B cell (primary cell): ENCODE measurements at regions of chr7 and their contacts with region 1.

Region 1: GRCh38 chr7:98251841-98252639 is at the start of gene TECPR1:
- DNase-seq: peak; percentile 91
- ATAC-seq: peak; percentile 95
- H3K4me3 ChIP-seq: peak within 1 kb of the TSS; percentile 78 to 95 (median 83)
- H3K4me3 Mint-ChIP-seq: peak within 1 kb of the TSS; percentile 98
- H3K27ac ChIP-seq: peak within 1 kb of the TSS; percentile 68 to 71
- H3K27ac Mint-ChIP-seq: peak within 1 kb of the TSS; percentile 90
- H3K4me1 ChIP-seq: peaks cover 22 to 40% of the 10 kb centered on the region in 2 donors
- H3K4me1 Mint-ChIP-seq: peaks cover 34% of the 10 kb centered on the region
- H3K27me3 ChIP-seq: no peaks in the 10 kb centered on the region
- H3K27me3 Mint-ChIP-seq: no peaks in the 10 kb centered on the region
- CTCF ChIP-seq: no peak
- total RNA-seq, gene TECPR1: 52.2 and 66.4 TPM in 2 replicates

Region 2: GRCh38 chr7:97971990-97972943 is 279.8 kb before region 1 on chr7:
- CTCF ChIA-PET with region 1: no interaction called
- POLR2A ChIA-PET with region 1: no interaction called
- intact Hi-C with region 1: loop called (anchors 2 kb)
- DNase-seq: peak; percentile 86
- ATAC-seq: peak; percentile 92
- H3K4me3 ChIP-seq: peak overlapping the region; percentile 67 to 94 (median 88)
- H3K4me3 Mint-ChIP-seq: peak overlapping the region; percentile 97
- H3K27ac ChIP-seq: peak overlapping the region; percentile 26 to 88
- H3K27ac Mint-ChIP-seq: peak overlapping the region; percentile 89
- H3K4me1 ChIP-seq: peaks cover 11 to 14% of the 10 kb centered on the region in 2 donors
- H3K4me1 Mint-ChIP-seq: peaks cover 14% of the 10 kb centered on the region
- H3K27me3 ChIP-seq: no peaks in the 10 kb centered on the region
- H3K27me3 Mint-ChIP-seq: peaks cover 5% of the 10 kb centered on the region
- CTCF ChIP-seq: no peak

Region 3: GRCh38 chr7:98202367-98203195 is 49.5 kb before region 1 on chr7:
- CTCF ChIA-PET with region 1: interaction called, 3 read pairs
- POLR2A ChIA-PET with region 1: no interaction called
- intact Hi-C with region 1: loop called (anchors 1 kb)
- DNase-seq: peak; percentile 91
- ATAC-seq: peak; percentile 90
- H3K4me3 ChIP-seq: peak overlapping the region in 4 of 5 experiments; percentile 9 to 55 (median 40)
- H3K4me3 Mint-ChIP-seq: peak overlapping the region; percentile 88
- H3K27ac ChIP-seq: peak overlapping the region in 1 of 2 donors; percentile 41
- H3K27ac Mint-ChIP-seq: peak overlapping the region; percentile 75
- H3K4me1 ChIP-seq: peaks cover 45 to 54% of the 10 kb centered on the region in 2 donors
- H3K4me1 Mint-ChIP-seq: peaks cover 53% of the 10 kb centered on the region
- H3K27me3 ChIP-seq: peaks cover 0 to 16% (median 6%) of the 10 kb centered on the region in 4 experiments
- H3K27me3 Mint-ChIP-seq: peaks cover 16% of the 10 kb centered on the region
- CTCF ChIP-seq: no peak

Region 4: GRCh38 chr7:98280791-98281756 is 29.0 kb after region 1 on chr7 and contains the start of gene BRI3:
- CTCF ChIA-PET with region 1: no interaction called
- POLR2A ChIA-PET with region 1: interaction called, 8 read pairs
- intact Hi-C with region 1: loop called (anchors 1 kb)
- DNase-seq: peak; percentile 91
- ATAC-seq: peak; percentile 84
- H3K4me3 ChIP-seq: peak within 1 kb of the TSS; percentile 69 to 92 (median 77)
- H3K4me3 Mint-ChIP-seq: peak within 1 kb of the TSS; percentile 89
- H3K27ac ChIP-seq: peak within 1 kb of the TSS; percentile 83
- H3K27ac Mint-ChIP-seq: peak within 1 kb of the TSS; percentile 91
- H3K4me1 ChIP-seq: peaks cover 21 to 40% of the 10 kb centered on the region in 2 donors
- H3K4me1 Mint-ChIP-seq: peaks cover 35% of the 10 kb centered on the region
- H3K27me3 ChIP-seq: no peaks in the 10 kb centered on the region
- H3K27me3 Mint-ChIP-seq: no peaks in the 10 kb centered on the region
- CTCF ChIP-seq: no peak
- total RNA-seq, gene BRI3: 78.8 and 86.7 TPM in 2 replicates

Region 5: DNA sequence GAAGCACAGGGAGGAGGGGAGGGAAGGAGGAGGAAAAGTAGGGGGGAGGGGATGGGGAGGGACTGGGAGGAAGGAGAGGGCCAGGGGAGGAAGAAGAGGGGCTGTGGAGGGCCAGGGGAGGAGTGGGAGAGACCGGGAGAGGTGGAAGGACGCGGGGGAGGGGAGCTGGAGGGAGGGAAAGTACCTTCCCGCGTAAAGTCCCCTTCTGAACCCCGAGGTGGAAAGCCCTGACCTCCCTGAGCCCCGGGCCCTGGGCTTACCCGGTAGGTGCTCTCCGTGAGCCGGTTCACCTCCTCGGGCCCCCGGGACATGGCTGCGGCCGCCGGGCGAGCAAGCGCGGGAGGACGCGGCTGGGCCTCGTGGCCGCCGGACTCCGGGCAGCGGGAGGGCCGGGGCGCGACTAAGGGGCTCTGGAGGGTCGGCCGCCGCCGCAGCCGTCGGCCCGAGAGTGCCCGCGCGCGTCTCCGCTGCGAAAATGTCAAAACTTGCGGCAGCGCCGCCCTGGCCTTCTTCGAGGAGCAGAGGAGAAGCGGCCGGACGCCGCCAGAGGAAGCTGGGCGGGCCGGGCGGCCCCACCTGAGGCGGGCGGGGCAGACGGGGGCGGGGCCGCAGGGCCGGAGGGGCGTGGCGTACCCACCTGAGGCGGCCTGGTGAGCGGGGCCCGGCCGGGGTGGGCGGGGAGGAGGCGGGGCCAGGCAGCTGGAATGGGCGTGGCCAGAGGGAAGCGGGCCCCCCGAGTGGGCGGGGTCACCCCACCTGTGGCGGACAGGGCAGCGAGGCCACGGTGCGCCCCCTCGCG is 148.7 kb after region 1 on chr7 and contains the start of gene BAIAP2L1:
- CTCF ChIA-PET with region 1: no interaction called
- POLR2A ChIA-PET with region 1: no interaction called
- intact Hi-C with region 1: loop called (anchors 1 kb)
- DNase-seq: peak; percentile 87
- ATAC-seq: peak; percentile 95
- H3K4me3 ChIP-seq: peak within 1 kb of the TSS in 3 of 5 experiments; percentile 42 to 53 (median 53)
- H3K4me3 Mint-ChIP-seq: peak within 1 kb of the TSS; percentile 73
- H3K27ac ChIP-seq: no peak within 1 kb of the TSS
- H3K27ac Mint-ChIP-seq: peak within 1 kb of the TSS; percentile 15
- H3K4me1 ChIP-seq: peaks cover 7 to 14% of the 10 kb centered on the region in 2 donors
- H3K4me1 Mint-ChIP-seq: peaks cover 20% of the 10 kb centered on the region
- H3K27me3 ChIP-seq: peaks cover 0 to 23% (median 12%) of the 10 kb centered on the region in 4 experiments
- H3K27me3 Mint-ChIP-seq: peaks cover 32% of the 10 kb centered on the region
- CTCF ChIP-seq: no peak
- total RNA-seq, gene BAIAP2L1: 2.7 and 3.7 TPM in 2 replicates